Activated CD8-positive, alpha-beta memory T cell treated with anti-CD3 and anti-CD28 coated beads, Interleukin-2, amount 10 ng/mL, durations not matched to agents 7 days and 5 days (primary cell): ENCODE measurements at regions of chr11 and their contacts with region 1.

Region 1: DNA sequence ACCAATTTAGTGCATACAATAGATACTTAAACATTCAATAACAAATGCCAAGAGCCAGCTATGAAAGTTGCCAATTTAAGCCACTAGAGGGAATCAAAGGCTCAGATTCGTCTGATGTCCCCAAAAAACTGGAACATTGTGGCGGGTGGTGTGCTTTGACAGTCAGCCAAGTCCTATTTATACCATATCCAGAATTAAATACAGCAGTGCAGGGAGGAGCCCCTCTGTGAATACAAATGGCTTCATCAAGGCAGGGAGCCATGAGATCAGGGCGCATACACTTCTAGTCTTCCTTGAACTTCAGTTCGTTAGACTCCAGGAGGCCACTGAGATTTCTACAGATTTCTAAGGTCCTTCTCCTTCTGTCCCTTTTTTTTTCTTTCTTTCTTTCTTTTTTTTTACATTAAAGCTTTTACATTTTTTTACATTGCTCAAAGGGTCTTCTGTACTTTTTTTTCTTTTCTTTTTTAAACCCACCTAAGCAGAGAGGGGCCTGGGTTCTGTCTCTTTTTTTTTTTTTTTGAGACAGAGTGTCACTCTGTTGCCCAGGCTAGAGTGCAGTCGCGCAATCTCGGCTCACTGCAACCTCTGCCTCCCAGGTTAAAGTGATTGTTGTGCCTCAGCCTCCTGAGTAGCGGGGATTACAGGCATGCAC is 41.5 kb upstream of the HSPA8 start:
- DNase-seq: peak; percentile 46
- ATAC-seq: peak; percentile 82
- H3K4me3 Mint-ChIP-seq: no peak overlapping the region
- H3K27ac Mint-ChIP-seq: no peak overlapping the region
- H3K4me1 Mint-ChIP-seq: peaks cover 4% of the 10 kb centered on the region
- H3K27me3 Mint-ChIP-seq: peaks cover 4% of the 10 kb centered on the region

Region 2: DNA sequence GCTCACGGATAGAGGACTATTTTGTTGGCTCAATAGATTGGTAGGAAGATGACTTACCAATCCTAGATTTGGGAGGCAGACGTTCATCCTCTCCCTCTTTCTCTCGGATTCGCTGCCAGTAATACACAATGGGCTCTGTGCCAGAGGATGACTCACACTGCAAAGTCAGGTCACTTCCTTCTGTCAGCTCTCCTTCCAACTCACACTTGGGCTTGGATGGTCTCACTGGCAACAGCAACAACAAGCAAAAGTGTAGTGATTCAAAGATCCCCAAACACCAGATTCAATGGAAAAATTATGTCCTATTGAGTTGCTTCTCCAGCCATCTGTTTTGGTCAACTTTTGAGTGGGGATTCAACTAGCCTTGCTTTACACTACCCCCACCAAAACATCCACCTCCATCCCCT is 19.8 kb before region 1 on chr11:
- CTCF ChIA-PET with region 1: interaction called, 29 read pairs
- DNase-seq: peak; percentile 83
- ATAC-seq: peak; percentile 67
- H3K4me3 Mint-ChIP-seq: peak overlapping the region; percentile 50
- H3K27ac Mint-ChIP-seq: peak overlapping the region; percentile 85
- H3K4me1 Mint-ChIP-seq: peaks cover 42% of the 10 kb centered on the region
- H3K27me3 Mint-ChIP-seq: no peaks in the 10 kb centered on the region

Region 3: DNA sequence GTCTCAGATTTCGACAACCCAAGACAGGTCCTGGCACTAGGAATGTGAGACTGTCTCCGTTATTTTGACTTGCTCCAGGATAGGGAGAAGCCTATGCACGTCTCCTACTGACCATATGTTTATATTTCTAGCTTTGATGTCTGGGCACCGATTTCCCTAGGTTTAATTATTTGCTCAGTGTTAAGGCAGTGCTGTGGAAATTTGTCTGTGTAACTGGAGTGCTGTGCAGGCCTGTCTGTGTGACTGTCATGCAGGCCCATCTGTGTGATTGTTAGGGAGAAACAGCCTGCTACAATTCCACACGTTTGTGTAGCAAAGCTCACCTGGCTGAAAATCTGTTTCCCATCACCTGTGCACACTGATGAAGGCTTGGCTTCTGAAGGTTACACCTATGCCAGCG is 11.9 kb before region 1 on chr11:
- CTCF ChIA-PET with region 1: interaction called, 29 read pairs
- DNase-seq: no peak
- ATAC-seq: no peak
- H3K4me3 Mint-ChIP-seq: no peak overlapping the region
- H3K27ac Mint-ChIP-seq: no peak overlapping the region
- H3K4me1 Mint-ChIP-seq: peaks cover 18% of the 10 kb centered on the region
- H3K27me3 Mint-ChIP-seq: no peaks in the 10 kb centered on the region

Region 4: DNA sequence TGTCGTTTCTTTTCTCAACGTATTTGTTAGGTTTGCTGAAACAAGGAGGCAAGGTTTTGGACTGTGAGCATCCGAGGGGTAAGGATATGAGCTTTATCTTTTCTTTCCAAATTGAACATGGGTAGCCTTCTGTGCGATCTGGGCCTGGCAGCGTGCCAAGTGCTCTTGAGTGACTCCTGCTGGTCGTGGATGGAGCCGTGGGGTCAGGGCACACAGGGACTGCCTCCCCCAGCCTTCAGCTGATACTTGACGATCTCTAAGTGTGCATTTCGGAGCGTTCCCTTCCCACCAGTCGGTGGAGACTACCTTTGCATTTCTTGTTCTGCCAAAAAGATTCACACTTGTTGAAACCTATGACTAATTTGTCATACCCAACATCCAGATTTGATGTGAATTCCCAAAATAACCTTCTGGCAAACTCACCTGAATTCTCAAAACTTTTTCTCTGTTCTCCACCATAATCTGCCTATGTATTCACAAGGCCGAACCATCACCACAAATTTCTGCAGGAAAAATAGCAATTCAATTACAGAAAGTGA is 131.7 kb after region 1 on chr11:
- CTCF ChIA-PET with region 1: interaction called, 10 read pairs
- DNase-seq: no peak
- ATAC-seq: no peak
- H3K4me3 Mint-ChIP-seq: no peak overlapping the region
- H3K27ac Mint-ChIP-seq: no peak overlapping the region
- H3K4me1 Mint-ChIP-seq: peaks cover 35% of the 10 kb centered on the region
- H3K27me3 Mint-ChIP-seq: peaks cover 10% of the 10 kb centered on the region

Region 5: GRCh38 chr11:123246749-123247495 is 143.5 kb after region 1 on chr11:
- CTCF ChIA-PET with region 1: interaction called, 161 read pairs
- DNase-seq: peak; percentile 89
- ATAC-seq: peak; percentile 92
- H3K4me3 Mint-ChIP-seq: no peak overlapping the region
- H3K27ac Mint-ChIP-seq: peak overlapping the region; percentile 18
- H3K4me1 Mint-ChIP-seq: peaks cover 9% of the 10 kb centered on the region
- H3K27me3 Mint-ChIP-seq: peaks cover 35% of the 10 kb centered on the region